AG04449 (cell line): ENCODE measurements at regions of chr1 and their contacts with region 1.

Region 1: DNA sequence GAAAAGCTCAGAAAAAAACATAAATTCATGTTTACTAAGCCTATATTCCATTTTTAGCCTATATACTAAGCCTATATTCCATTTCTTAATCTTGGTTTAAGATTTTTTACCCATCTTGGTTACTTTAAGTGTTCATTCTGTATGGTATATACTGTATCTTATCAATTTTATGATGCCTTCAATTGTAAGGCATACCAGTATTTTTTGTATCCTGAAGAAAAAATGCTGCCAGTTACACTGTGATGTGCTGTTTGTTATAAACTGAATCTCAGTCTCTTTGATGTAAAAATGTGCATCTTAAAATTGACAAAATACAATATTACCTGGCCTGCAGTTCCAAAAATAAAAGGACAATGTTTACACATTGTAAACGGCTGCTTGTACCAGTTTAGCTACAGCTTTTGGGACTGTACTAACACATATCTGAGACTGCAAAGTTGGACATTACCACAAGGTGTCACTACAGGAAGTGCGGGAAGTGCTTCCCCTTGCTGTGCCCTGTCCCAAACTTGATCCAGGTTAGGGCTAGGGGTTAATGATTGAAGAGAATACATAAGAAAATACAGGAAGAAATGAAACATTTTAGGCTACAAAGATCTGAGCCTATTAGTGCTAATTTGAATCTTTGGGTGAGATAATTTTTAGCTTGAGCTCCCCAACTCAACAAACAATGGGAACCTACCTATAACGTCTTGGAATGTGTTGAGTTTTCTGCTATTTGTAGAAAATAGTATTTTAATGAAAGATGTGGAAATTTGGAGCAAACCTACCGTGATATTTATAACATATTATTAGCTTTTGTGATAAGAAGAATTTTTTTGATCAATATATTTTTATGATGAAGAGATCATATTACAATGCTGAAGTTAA is 108.9 kb downstream of the LBR start:
- DNase-seq: no peak
- H3K4me3 ChIP-seq: no peak overlapping the region
- CTCF ChIP-seq: peak; percentile 77

Region 2: GRCh38 chr1:225304996-225305395 is 13.9 kb before region 1 on chr1:
- CTCF ChIA-PET with region 1: interaction called, 24 read pairs
- POLR2A ChIA-PET with region 1: no interaction called
- DNase-seq: no peak
- H3K4me3 ChIP-seq: no peak overlapping the region
- CTCF ChIP-seq: no peak

Region 3: DNA sequence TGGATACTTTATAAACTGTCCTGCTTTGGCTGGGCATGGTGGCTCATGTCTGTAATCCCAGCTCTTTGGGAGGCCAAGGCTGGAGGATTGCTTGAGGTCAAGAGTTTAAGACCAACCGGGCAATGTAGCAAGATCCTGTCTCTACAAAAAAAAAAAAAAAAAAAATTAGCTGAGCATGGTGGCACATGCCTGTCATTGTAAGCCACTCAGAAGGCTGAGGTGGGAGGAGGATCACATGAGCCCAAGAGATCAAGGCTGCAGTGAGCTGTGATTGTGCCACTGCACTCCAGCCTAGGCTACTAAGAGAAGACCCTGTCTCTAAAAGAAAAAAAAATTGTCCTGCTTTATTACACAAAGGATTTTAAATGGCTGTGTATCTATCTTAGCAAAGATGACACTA is 13.7 kb after region 1 on chr1:
- CTCF ChIA-PET with region 1: interaction called, 21 read pairs
- POLR2A ChIA-PET with region 1: no interaction called
- DNase-seq: no peak
- H3K4me3 ChIP-seq: no peak overlapping the region
- CTCF ChIP-seq: no peak

Region 4: DNA sequence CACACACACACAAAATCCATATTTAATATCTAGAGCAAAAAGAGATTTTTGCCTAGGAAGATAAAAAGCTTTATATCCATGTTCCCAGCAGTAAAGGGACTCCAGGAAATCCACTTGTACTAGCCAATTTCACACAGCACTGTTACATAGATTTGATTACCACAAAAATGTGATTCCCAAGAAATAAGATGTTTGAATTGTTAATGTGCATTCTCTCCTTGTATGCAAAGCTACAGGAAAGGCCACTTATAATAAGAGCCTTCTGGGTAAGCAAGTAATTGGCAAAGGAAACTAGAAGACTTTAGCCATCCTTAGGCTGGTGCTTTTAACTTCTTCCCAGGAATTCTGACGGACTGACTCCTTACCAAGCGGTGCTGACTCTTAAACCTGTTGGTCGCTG is 19.6 kb after region 1 on chr1:
- CTCF ChIA-PET with region 1: interaction called, 21 read pairs
- POLR2A ChIA-PET with region 1: no interaction called
- DNase-seq: no peak
- H3K4me3 ChIP-seq: no peak overlapping the region
- CTCF ChIP-seq: no peak

Region 5: GRCh38 chr1:225378880-225379279 is 59.9 kb after region 1 on chr1:
- CTCF ChIA-PET with region 1: interaction called, 10 read pairs
- POLR2A ChIA-PET with region 1: no interaction called
- DNase-seq: peak; percentile 67
- H3K4me3 ChIP-seq: no peak overlapping the region
- CTCF ChIP-seq: no peak

Region 6: GRCh38 chr1:225413708-225414375 is 94.9 kb after region 1 on chr1:
- CTCF ChIA-PET with region 1: no interaction called
- POLR2A ChIA-PET with region 1: no interaction called
- DNase-seq: no peak
- H3K4me3 ChIP-seq: no peak overlapping the region
- CTCF ChIP-seq: no peak

Region 7: GRCh38 chr1:225441314-225442122 is 122.6 kb after region 1 on chr1:
- CTCF ChIA-PET with region 1: interaction called, 11 read pairs
- POLR2A ChIA-PET with region 1: no interaction called
- DNase-seq: no peak
- H3K4me3 ChIP-seq: no peak overlapping the region
- CTCF ChIP-seq: peak; percentile 5

Region 8: GRCh38 chr1:225627304-225627947 is 308.5 kb after region 1 on chr1:
- CTCF ChIA-PET with region 1: no interaction called
- POLR2A ChIA-PET with region 1: no interaction called
- DNase-seq: no peak
- H3K4me3 ChIP-seq: no peak overlapping the region
- CTCF ChIP-seq: no peak

Region 9: GRCh38 chr1:225977937-225978748 is 659.2 kb after region 1 on chr1:
- CTCF ChIA-PET with region 1: interaction called, 35 read pairs
- POLR2A ChIA-PET with region 1: no interaction called
- DNase-seq: no peak
- H3K4me3 ChIP-seq: no peak overlapping the region
- CTCF ChIP-seq: no peak